ENCODE measurements at regions of chr12 and their contacts with region 1.

Region 1: GRCh38 chr12:75511116-75512048 is at the start of gene KRR1:
- DNase-seq: peak; percentile 96
- H3K4me3 ChIP-seq: peak within 1 kb of the TSS; percentile 97
- H3K27ac ChIP-seq: peak within 1 kb of the TSS; percentile 62
- H3K4me1 ChIP-seq: peaks cover 22% of the 10 kb centered on the region
- CTCF ChIP-seq: no peak
- total RNA-seq, gene KRR1: 27.6 and 44.0 TPM in 2 replicates

Region 2: DNA sequence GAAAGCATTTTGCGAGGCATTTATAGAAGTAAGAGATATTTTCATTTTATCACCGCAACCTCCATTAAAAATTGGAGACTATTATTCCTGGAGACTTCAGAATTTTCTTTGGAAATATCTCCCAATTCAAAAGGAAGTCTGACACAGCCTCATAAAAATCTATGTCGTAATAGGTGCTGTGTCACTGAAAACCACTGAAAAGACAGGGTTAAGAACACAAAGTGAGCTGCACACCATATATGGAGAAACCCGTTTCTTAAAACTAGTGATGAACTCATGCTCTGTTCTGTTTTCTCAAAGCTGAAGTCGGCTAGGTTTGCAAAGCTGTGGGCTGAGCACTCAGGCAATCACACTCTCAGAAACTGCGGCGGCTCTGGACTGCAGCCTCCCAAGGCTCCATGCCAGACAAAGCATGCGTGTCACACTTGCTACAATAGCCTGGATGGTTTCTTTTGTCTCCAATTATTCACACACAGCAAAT is 30.9 kb before region 1 on chr12 and contains the start of gene GLIPR1:
- CTCF ChIA-PET with region 1: no interaction called
- POLR2A ChIA-PET with region 1: interaction called, 8 read pairs
- intact Hi-C with region 1: loop called (anchors 2 kb)
- DNase-seq: peak; percentile 56
- H3K4me3 ChIP-seq: peak within 1 kb of the TSS; percentile 64
- H3K27ac ChIP-seq: peak within 1 kb of the TSS; percentile 62
- H3K4me1 ChIP-seq: peaks cover 64% of the 10 kb centered on the region
- CTCF ChIP-seq: no peak
- total RNA-seq, gene GLIPR1: 2.8 and 3.4 TPM in 2 replicates

Region 3: GRCh38 chr12:76186131-76186916 is 674.9 kb after region 1 on chr12:
- CTCF ChIA-PET with region 1: no interaction called
- POLR2A ChIA-PET with region 1: no interaction called
- intact Hi-C with region 1: no loop called
- DNase-seq: no peak
- H3K4me3 ChIP-seq: no peak overlapping the region
- H3K27ac ChIP-seq: no peak overlapping the region
- H3K4me1 ChIP-seq: no peaks in the 10 kb centered on the region
- CTCF ChIP-seq: no peak

Region 4: DNA sequence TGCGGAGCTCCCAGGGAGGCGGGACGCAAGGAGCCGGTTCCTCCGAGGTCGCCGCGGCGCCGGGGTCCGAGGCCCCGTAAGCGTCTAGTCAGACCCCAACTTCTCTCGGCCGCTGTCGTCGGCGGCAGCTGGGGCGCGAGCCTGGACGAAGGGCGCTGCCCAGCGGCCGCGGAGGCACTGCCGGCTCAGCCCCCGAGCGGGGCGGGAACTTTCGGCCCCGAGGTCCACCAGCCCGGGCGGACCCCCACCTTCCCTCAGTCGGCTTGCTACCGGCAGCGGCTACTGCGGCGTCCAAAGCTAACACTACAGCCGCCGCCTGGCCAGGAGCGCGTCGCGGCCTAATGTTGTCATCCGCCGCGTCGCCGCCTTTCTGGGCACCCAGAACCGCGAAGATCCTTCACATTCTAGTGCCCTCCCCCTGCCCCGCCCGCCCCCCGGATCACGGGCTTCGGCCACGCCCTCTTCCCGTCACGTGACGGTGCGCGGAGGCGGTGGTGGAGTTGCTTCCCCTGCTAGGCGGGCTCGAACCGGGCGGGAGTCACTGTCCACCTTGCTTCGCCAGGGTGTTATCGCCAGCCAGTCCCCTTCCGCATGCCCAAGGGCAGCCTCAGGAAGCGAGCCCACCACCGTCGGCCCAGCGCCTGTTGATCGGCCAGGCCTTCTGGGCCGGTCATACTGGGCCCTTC is 1048.2 kb after region 1 on chr12 and contains the start of gene OSBPL8:
- CTCF ChIA-PET with region 1: no interaction called
- POLR2A ChIA-PET with region 1: no interaction called
- intact Hi-C with region 1: loop called (anchors 10 kb)
- DNase-seq: peak; percentile 93
- H3K4me3 ChIP-seq: peak within 1 kb of the TSS; percentile 100
- H3K27ac ChIP-seq: peak within 1 kb of the TSS; percentile 66
- H3K4me1 ChIP-seq: peaks cover 40% of the 10 kb centered on the region
- CTCF ChIP-seq: peak; percentile 38; the same call in 1 of the 2 replicates
- total RNA-seq, gene OSBPL8: 25.0 and 34.0 TPM in 2 replicates